HCT116 (cell line): ENCODE measurements at regions of chr4 and their contacts with region 1.

Region 1: GRCh38 chr4:99949034-99949998 is 759 bp downstream of the H2AZ1 start:
- DNase-seq: peak; percentile 91
- ATAC-seq: peak; percentile 23
- H3K4me3 ChIP-seq: peak overlapping the region; percentile 85 to 94
- H3K27ac ChIP-seq: peak overlapping the region; percentile 94
- H3K4me1 ChIP-seq: peaks cover 16 to 39% of the 10 kb centered on the region in 2 experiments; a peak in 3 of 4 replicates
- H3K27me3 ChIP-seq: no peaks in the 10 kb centered on the region
- CTCF ChIP-seq: peak in 2 of 3 experiments; percentile 83 to 87; a peak in 4 of 6 replicates
- POLR2A ChIP-seq: peak; percentile 25
- RAD21 ChIP-seq: no peak

Region 2: GRCh38 chr4:99563310-99564186 is 385.8 kb before region 1 on chr4 and contains the start of gene TRMT10A:
- CTCF ChIA-PET with region 1: no interaction called
- POLR2A ChIA-PET with region 1: no interaction called
- RAD21 ChIA-PET with region 1: no interaction called
- intact Hi-C with region 1: loop called (anchors 2 kb)
- DNase-seq: peak; percentile 96
- ATAC-seq: peak; percentile 92
- H3K4me3 ChIP-seq: peak within 1 kb of the TSS; percentile 61 to 86
- H3K27ac ChIP-seq: peak within 1 kb of the TSS; percentile 75
- H3K4me1 ChIP-seq: peaks cover 0 to 18% of the 10 kb centered on the region in 2 experiments; a peak in 3 of 4 replicates
- H3K27me3 ChIP-seq: no peaks in the 10 kb centered on the region
- CTCF ChIP-seq: no peak
- POLR2A ChIP-seq: no peak
- RAD21 ChIP-seq: no peak
- total RNA-seq, gene TRMT10A: 7.4 TPM

Region 3: DNA sequence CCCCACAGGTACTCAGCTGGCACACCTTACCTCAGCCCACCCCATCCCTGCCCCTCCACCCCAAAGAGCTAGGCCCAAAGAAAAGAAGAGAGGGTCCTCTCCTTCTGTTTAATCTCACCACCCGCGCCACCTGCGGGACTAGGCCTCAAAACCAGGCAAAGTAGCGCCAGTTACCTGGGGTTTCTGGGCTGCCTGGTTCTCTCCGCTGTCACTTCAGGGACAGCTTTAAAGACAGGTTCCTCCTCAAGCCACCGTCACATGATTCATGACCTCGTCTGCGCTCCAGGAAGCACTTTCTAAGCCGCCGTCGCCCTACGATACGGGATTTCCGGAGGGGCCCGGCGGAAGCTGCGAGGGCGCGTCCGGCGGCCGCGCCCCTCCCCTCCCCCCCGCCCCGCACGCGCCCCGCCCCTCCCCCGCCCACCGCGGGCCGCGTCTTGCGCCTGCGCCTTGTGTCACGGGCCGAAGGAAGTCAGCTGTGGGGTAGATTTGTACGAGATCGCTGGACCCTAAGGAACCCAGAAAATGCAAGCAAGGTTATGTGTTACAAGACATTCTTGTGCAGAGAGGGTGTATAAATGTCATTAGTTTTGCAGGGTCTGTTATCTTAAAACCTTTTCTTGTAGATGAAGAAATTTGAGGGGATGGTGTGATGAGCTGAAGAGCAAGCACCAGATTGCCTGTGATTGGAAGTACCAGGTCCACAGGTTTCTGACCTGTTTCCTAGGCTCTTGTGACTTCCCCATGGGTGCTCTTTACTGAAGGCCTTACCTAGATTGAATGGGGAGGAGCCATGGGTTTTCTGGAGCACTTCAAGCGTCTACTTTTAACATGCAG is 54.9 kb before region 1 on chr4 and contains the start of gene LAMTOR3:
- CTCF ChIA-PET with region 1: interaction called, 3 read pairs
- POLR2A ChIA-PET with region 1: interaction called, 8 read pairs
- RAD21 ChIA-PET with region 1: no interaction called
- intact Hi-C with region 1: loop called (anchors 5 kb)
- DNase-seq: peak; percentile 79
- ATAC-seq: peak; percentile 99
- H3K4me3 ChIP-seq: peak within 1 kb of the TSS; percentile 76 to 81
- H3K27ac ChIP-seq: peak within 1 kb of the TSS; percentile 34
- H3K4me1 ChIP-seq: peaks cover 4 to 18% of the 10 kb centered on the region in 2 experiments; a peak in 3 of 4 replicates
- H3K27me3 ChIP-seq: no peaks in the 10 kb centered on the region
- CTCF ChIP-seq: no peak
- POLR2A ChIP-seq: peak; percentile 34
- RAD21 ChIP-seq: no peak
- total RNA-seq, gene LAMTOR3: 21.0 TPM

Region 4: DNA sequence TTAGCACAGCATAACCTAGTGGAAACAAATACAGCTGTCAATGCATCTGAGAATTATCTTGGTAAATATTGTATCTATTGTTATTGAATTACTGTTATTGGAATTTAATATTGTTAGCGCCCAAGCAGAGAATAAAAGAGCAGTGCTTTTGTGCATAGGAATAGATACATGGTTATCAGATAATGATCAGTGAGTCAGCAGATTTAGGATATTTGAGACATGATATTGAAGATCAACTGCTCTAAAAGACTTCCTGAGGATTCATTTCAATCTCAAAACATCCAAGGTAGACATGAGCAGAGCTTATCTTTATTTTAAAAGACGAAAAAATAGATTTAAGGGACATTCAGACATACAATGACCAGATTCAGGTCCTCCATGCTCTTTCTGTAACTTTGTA is 11.3 kb after region 1 on chr4:
- CTCF ChIA-PET with region 1: no interaction called
- POLR2A ChIA-PET with region 1: interaction called, 25 read pairs
- RAD21 ChIA-PET with region 1: no interaction called
- intact Hi-C with region 1: no loop called
- DNase-seq: no peak
- ATAC-seq: no peak
- H3K4me3 ChIP-seq: no peak overlapping the region
- H3K27ac ChIP-seq: peak overlapping the region; percentile 32; the same call in 1 of the 2 replicates
- H3K4me1 ChIP-seq: peaks cover 3 to 13% of the 10 kb centered on the region in 2 experiments; a peak in 2 of 4 replicates
- H3K27me3 ChIP-seq: no peaks in the 10 kb centered on the region
- CTCF ChIP-seq: no peak
- POLR2A ChIP-seq: no peak
- RAD21 ChIP-seq: no peak